ENCODE measurements at regions of chr5 and their contacts with region 1.

Region 1: GRCh38 chr5:163505368-163506094 is at the start of gene MAT2B:
- DNase-seq: peak; percentile 73 to 89
- H3K4me3 ChIP-seq: peak within 1 kb of the TSS; percentile 67 to 98 (median 89)
- H3K27ac ChIP-seq: peak within 1 kb of the TSS; percentile 89
- H3K4me1 ChIP-seq: peaks cover 0 to 9% (median 5%) of the 10 kb centered on the region in 4 experiments; a peak in 4 of 7 replicates
- H3K27me3 ChIP-seq: no peaks in the 10 kb centered on the region
- CTCF ChIP-seq: peak; percentile 40 to 53 (median 48); a peak in 3 of 4 replicates
- EP300 ChIP-seq: no peak
- POLR2A ChIP-seq: peak; percentile 83 to 89
- RAD21 ChIP-seq: peak in 1 of 2 experiments; percentile 17; a peak in 1 of 4 replicates
- total RNA-seq, gene MAT2B: 64.1 and 65.2 TPM in 2 replicates

Region 2: DNA sequence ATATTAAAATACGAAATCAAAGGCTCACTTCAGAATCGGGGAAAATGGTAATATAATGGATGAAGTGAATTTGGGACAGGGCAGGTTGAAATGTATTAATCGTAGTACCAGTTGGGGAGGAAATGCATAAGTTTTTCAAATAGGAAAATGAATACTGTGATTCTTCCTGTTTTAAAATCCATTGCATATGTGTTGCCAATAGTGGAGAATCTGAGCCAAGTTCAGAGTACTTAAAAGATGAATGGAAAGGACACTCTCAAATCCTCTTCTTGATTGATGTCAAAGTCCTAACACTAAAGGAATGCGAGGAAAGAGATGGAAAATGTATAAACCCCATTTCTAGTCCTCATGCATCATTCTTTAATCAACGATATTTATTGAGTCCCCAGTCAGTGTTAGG is 229.1 kb before region 1 on chr5:
- CTCF ChIA-PET with region 1: no interaction called
- POLR2A ChIA-PET with region 1: no interaction called
- DNase-seq: no peak
- H3K4me3 ChIP-seq: no peak overlapping the region
- H3K27ac ChIP-seq: no peak overlapping the region
- H3K4me1 ChIP-seq: no peaks in the 10 kb centered on the region
- H3K27me3 ChIP-seq: no peaks in the 10 kb centered on the region
- CTCF ChIP-seq: no peak
- EP300 ChIP-seq: no peak
- POLR2A ChIP-seq: no peak
- RAD21 ChIP-seq: no peak

Region 3: DNA sequence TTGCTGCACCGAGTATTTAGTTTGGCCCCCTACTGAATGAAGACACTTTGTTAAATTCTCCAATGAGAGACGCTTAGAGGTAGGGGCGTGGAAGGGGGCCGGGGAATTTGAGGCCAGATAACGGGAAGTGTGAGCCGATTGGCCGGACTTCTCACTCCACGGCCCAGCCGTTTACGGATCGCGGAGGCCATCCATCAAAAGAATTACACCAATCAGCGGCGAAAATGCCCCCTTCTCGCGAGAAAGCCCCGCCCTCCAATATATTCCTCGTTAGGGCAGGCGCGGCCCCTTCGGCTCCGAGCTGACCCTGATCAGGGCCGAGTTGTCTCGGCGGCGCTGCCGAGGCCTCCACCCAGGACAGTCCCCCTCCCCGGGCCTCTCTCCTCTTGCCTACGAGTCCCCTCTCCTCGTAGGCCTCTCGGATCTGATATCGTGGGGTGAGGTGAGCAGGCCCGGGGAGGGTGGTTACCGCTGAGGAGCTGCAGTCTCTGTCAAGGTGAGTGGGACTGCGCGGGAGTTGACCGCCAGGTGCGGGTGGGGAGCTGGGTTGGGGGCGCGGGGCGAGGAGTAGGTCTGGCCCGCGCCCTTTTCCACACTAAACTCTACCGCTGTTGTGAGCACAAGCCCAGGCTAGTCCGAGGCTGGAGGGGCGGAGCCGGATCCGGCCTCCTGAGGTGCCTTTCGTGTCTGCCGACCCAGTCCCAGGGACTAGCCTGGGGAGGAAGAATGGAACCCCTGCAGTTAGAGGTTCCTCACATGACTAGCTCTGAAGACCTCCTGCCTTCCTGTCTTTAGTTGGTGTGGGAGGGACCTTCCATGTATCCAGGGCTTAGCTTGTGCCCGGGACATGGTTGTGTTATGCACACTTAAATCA is 68.0 kb before region 1 on chr5 and contains the start of gene CCNG1:
- CTCF ChIA-PET with region 1: interaction called, 3 read pairs
- POLR2A ChIA-PET with region 1: interaction called, 16 read pairs
- DNase-seq: peak; percentile 92 to 97
- H3K4me3 ChIP-seq: peak within 1 kb of the TSS; percentile 80 to 92 (median 87)
- H3K27ac ChIP-seq: peak within 1 kb of the TSS; percentile 94
- H3K4me1 ChIP-seq: peaks cover 0 to 3% (median 1%) of the 10 kb centered on the region in 4 experiments; a peak in 3 of 7 replicates
- H3K27me3 ChIP-seq: no peaks in the 10 kb centered on the region
- CTCF ChIP-seq: no peak
- EP300 ChIP-seq: no peak; a peak in 1 of 3 replicates
- POLR2A ChIP-seq: peak; percentile 94 to 99
- RAD21 ChIP-seq: no peak
- total RNA-seq, gene CCNG1: 363 and 369 TPM in 2 replicates

Region 4: GRCh38 chr5:163489055-163489744 is 16.3 kb before region 1 on chr5:
- CTCF ChIA-PET with region 1: interaction called, 8 read pairs
- POLR2A ChIA-PET with region 1: interaction called, 48 read pairs
- DNase-seq: peak in 1 of 2 experiments; percentile 63
- H3K4me3 ChIP-seq: no peak overlapping the region
- H3K27ac ChIP-seq: no peak overlapping the region
- H3K4me1 ChIP-seq: no peaks in the 10 kb centered on the region
- H3K27me3 ChIP-seq: no peaks in the 10 kb centered on the region
- CTCF ChIP-seq: peak; percentile 29 to 64 (median 49); a peak in 2 of 4 replicates
- EP300 ChIP-seq: no peak
- POLR2A ChIP-seq: no peak
- RAD21 ChIP-seq: peak; percentile 41 to 52

Region 5: GRCh38 chr5:163525096-163525495 is 19.6 kb after region 1 on chr5:
- CTCF ChIA-PET with region 1: interaction called, 3 read pairs
- POLR2A ChIA-PET with region 1: interaction called, 12 read pairs
- DNase-seq: no peak
- H3K4me3 ChIP-seq: no peak overlapping the region
- H3K27ac ChIP-seq: no peak overlapping the region
- H3K4me1 ChIP-seq: no peaks in the 10 kb centered on the region
- H3K27me3 ChIP-seq: peaks cover 0 to 1% (median 0%) of the 10 kb centered on the region in 4 experiments; a peak in 1 of 7 replicates
- CTCF ChIP-seq: no peak
- EP300 ChIP-seq: no peak
- POLR2A ChIP-seq: no peak
- RAD21 ChIP-seq: no peak

Region 6: DNA sequence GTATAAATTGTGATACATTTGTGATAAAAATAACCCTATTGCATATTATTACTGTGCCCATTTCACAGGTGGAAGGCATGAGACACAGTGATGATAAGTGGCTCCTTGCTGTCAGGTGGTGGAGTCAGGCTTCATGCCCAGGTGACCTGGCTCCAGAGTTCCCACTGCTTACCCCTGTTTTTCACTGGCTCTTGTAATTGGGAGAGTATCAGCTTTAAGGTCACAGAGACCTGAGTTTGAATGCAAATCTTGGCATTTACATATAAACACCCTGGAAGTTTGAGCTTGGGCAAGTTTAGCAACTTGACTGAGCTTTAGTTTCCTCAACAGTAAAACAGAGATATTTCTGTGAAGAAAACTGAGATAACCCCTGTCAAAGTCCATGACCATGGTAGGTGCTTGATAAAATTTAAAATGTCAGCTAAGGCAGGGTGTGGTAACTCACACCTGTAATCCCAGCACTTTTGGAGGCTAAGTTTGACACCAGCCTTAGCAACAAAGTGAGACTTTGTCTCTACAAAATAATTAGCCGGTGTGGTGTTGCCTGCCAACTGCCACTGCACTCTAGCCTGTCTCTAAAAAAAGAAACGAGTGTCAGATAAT is 29.1 kb after region 1 on chr5:
- CTCF ChIA-PET with region 1: interaction called, 5 read pairs
- POLR2A ChIA-PET with region 1: interaction called, 22 read pairs
- DNase-seq: peak in 1 of 2 experiments; percentile 44
- H3K4me3 ChIP-seq: peak overlapping the region in 1 of 4 experiments; percentile 20; a peak in 1 of 8 replicates
- H3K27ac ChIP-seq: peak overlapping the region; percentile 20; the same call in 1 of the 2 replicates
- H3K4me1 ChIP-seq: peaks cover 2 to 27% (median 13%) of the 10 kb centered on the region in 4 experiments; a peak in 6 of 7 replicates
- H3K27me3 ChIP-seq: no peaks in the 10 kb centered on the region
- CTCF ChIP-seq: no peak
- EP300 ChIP-seq: no peak
- POLR2A ChIP-seq: no peak
- RAD21 ChIP-seq: no peak

Region 7: DNA sequence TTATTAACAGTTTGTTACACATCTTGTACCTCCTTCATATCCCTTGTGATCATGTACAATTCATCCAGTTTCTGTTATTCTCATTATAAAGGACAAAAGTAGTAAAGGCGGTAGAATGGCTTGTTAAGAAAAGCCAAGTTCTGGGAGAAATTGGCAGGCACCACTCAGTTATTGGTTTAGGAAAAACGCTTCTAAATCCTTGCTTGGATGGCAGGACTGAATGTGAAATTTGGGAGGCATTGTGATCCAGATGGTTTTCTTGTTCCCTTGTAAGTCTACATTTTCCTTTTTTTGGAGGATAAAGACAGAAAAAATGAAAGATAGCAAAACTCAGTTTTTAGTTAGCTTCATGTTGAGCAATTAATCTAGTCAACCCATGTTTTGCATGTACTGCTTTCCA is 130.1 kb after region 1 on chr5:
- CTCF ChIA-PET with region 1: no interaction called
- POLR2A ChIA-PET with region 1: no interaction called
- DNase-seq: no peak
- H3K4me3 ChIP-seq: no peak overlapping the region
- H3K27ac ChIP-seq: no peak overlapping the region
- H3K4me1 ChIP-seq: no peaks in the 10 kb centered on the region
- H3K27me3 ChIP-seq: no peaks in the 10 kb centered on the region
- CTCF ChIP-seq: no peak
- EP300 ChIP-seq: no peak
- POLR2A ChIP-seq: no peak
- RAD21 ChIP-seq: no peak

Measured in H1 (cell line).